ENCODE measurements at regions of chr3 and their contacts with region 1.

Region 1: DNA sequence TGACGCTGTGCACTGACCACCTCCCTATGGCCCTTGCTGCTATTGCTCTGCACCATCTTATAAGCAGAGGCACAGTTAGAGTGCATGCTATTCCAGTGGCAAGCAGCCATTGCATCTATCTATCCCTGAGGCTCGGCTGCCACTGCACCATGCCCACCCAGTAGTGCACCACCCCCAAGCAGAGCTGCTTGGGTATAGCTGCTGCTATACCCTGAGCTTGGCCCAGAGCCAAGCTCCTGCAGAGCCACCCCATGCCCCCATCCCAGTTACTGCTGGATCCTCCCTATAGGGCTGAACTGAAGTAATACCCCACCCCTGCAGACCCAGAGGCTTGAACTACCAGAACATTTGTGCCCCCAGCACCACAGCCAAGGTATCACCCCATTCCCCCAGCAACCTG is 19.6 kb upstream of the IGSF10 start:
- DNase-seq: no peak
- ATAC-seq: no peak
- H3K4me3 Mint-ChIP-seq: no peak overlapping the region
- H3K27ac Mint-ChIP-seq: no peak overlapping the region
- H3K4me1 Mint-ChIP-seq: no peaks in the 10 kb centered on the region
- H3K27me3 Mint-ChIP-seq: peaks cover 10% of the 10 kb centered on the region

Region 2: GRCh38 chr3:151468284-151468917 is 12.1 kb before region 1 on chr3:
- CTCF ChIA-PET with region 1: interaction called, 19 read pairs
- POLR2A ChIA-PET with region 1: no interaction called
- intact Hi-C with region 1: no loop called
- DNase-seq: peak; percentile 46
- ATAC-seq: peak; percentile 70
- H3K4me3 Mint-ChIP-seq: no peak overlapping the region
- H3K27ac Mint-ChIP-seq: no peak overlapping the region
- H3K4me1 Mint-ChIP-seq: no peaks in the 10 kb centered on the region
- H3K27me3 Mint-ChIP-seq: peaks cover 2% of the 10 kb centered on the region